Activated CD4-positive, alpha-beta memory T cell treated with anti-CD3 and anti-CD28 coated beads, Interleukin-2, amount 10 ng/mL, durations not matched to agents 7 days and 5 days (primary cell): ENCODE measurements at regions of chr1 and their contacts with region 1.

Region 1: DNA sequence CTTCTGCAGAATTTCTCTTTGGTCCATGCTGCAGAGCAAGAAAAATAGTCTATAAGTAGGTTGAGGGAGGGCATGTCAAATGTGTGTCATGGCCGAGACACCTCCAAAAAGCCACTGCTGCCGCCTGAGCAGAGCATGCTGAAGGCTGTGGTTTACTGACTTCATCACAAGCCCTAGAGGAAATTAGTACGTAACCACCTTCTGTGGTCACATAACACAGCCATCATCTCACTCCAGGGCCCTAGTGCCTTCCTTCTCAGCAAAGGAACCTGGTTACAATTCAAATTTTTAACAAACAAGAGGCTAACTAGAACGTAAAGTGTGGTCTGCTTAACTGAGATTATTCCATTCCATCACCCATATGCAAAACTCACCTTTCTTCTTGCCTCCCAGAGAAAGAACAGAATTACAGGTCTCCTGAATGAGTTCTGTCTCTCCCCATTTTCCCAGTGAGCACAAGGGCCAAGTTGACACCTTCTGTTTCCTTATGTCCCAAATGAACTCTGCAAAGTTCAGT is at the start of gene PTPN22:
- DNase-seq: peak; percentile 89
- H3K4me3 Mint-ChIP-seq: peak within 1 kb of the TSS; percentile 91
- H3K27ac Mint-ChIP-seq: peak within 1 kb of the TSS; percentile 98
- H3K4me1 Mint-ChIP-seq: peaks cover 74% of the 10 kb centered on the region
- H3K27me3 Mint-ChIP-seq: no peaks in the 10 kb centered on the region
- total RNA-seq, gene PTPN22: 79.4 to 81.1 TPM

Region 2: GRCh38 chr1:113721010-113721409 is 150.6 kb before region 1 on chr1:
- CTCF ChIA-PET with region 1: no interaction called
- POLR2A ChIA-PET with region 1: no interaction called
- DNase-seq: no peak
- H3K4me3 Mint-ChIP-seq: no peak overlapping the region
- H3K27ac Mint-ChIP-seq: no peak overlapping the region
- H3K4me1 Mint-ChIP-seq: no peaks in the 10 kb centered on the region
- H3K27me3 Mint-ChIP-seq: no peaks in the 10 kb centered on the region

Region 3: GRCh38 chr1:113859478-113860175 is 12.0 kb before region 1 on chr1:
- CTCF ChIA-PET with region 1: interaction called, 10 read pairs
- POLR2A ChIA-PET with region 1: interaction called, 28 read pairs
- DNase-seq: no peak
- H3K4me3 Mint-ChIP-seq: no peak overlapping the region
- H3K27ac Mint-ChIP-seq: peak overlapping the region; percentile 64
- H3K4me1 Mint-ChIP-seq: peaks cover 50% of the 10 kb centered on the region
- H3K27me3 Mint-ChIP-seq: no peaks in the 10 kb centered on the region

Region 4: DNA sequence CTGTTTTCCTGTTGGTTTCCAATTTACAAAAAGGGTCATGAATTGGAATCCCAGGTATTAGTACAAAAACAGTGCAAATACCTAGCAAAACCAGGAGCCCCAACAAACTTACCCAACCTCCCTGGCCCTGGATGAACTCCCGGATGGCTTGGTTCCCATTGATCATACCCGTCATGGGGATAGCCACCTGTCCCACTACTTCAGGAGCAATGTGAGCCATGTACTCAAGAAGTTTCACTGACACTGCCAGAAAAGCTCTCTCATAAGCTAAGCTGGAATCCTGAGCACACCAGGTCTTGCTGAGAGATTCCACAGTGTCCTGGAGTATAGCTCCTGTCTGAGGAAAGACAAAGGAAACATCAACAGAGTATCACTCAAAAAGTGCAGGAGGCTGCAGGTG is 10.0 kb after region 1 on chr1:
- CTCF ChIA-PET with region 1: interaction called, 6 read pairs
- POLR2A ChIA-PET with region 1: interaction called, 18 read pairs
- DNase-seq: no peak
- H3K4me3 Mint-ChIP-seq: no peak overlapping the region
- H3K27ac Mint-ChIP-seq: no peak overlapping the region
- H3K4me1 Mint-ChIP-seq: peaks cover 51% of the 10 kb centered on the region
- H3K27me3 Mint-ChIP-seq: no peaks in the 10 kb centered on the region

Region 5: GRCh38 chr1:113887402-113888175 is 15.9 kb after region 1 on chr1 and contains the start of gene BCL2L15:
- CTCF ChIA-PET with region 1: interaction called, 3 read pairs
- POLR2A ChIA-PET with region 1: interaction called, 10 read pairs
- DNase-seq: no peak
- H3K4me3 Mint-ChIP-seq: no peak within 1 kb of the TSS
- H3K27ac Mint-ChIP-seq: no peak within 1 kb of the TSS
- H3K4me1 Mint-ChIP-seq: peaks cover 26% of the 10 kb centered on the region
- H3K27me3 Mint-ChIP-seq: no peaks in the 10 kb centered on the region
- total RNA-seq, gene BCL2L15: 1.6 to 2.9 TPM

Region 6: GRCh38 chr1:113917400-113918082 is 45.9 kb after region 1 on chr1:
- CTCF ChIA-PET with region 1: no interaction called
- POLR2A ChIA-PET with region 1: no interaction called
- DNase-seq: no peak
- H3K4me3 Mint-ChIP-seq: no peak overlapping the region
- H3K27ac Mint-ChIP-seq: no peak overlapping the region
- H3K4me1 Mint-ChIP-seq: peaks cover 7% of the 10 kb centered on the region
- H3K27me3 Mint-ChIP-seq: peaks cover 1% of the 10 kb centered on the region

Region 7: DNA sequence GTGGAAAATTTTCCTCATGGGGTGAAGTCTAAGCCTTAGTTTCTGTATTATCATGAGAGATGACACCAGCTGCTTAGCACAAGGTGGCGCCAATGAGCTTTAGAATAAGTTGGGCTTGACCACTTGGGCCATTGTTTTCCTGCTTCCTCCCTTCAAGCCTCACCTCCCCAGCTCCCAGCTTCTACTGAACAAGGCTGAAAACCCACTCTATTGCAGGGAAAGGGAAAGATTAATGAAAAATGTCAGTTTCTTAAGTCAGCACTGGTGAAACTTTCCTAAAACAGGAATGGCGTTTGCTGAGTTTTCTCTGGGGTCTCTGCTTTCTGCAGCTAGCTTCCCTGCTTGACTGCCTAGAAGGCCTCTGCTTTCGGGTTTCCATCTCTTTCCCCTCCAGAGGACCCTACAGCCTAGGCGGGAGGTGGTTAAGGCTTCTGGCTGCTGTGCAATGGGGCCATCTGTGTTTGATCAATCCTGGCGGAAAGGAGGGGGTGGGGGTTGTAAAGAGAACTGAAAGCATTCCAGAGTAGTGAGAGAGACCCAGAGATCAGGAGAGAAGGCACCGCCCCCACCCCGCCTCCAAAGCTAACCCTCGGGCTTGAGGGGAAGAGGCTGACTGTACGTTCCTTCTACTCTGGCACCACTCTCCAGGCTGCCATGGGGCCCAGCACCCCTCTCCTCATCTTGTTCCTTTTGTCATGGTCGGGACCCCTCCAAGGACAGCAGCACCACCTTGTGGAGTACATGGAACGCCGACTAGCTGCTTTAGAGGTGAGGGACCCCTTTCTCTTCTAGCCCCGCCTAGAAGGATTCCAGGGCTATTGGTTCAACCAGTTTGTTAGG is 107.4 kb after region 1 on chr1 and contains the start of gene OLFML3:
- CTCF ChIA-PET with region 1: no interaction called
- POLR2A ChIA-PET with region 1: no interaction called
- DNase-seq: peak; percentile 62
- H3K4me3 Mint-ChIP-seq: no peak within 1 kb of the TSS
- H3K27ac Mint-ChIP-seq: peak within 1 kb of the TSS; percentile 9
- H3K4me1 Mint-ChIP-seq: peaks cover 42% of the 10 kb centered on the region
- H3K27me3 Mint-ChIP-seq: no peaks in the 10 kb centered on the region
- total RNA-seq, gene OLFML3: 0.20 to 0.45 TPM